Mammary epithelial cell (primary cell): ENCODE measurements at regions of chr9 and their contacts with region 1.

Region 1: DNA sequence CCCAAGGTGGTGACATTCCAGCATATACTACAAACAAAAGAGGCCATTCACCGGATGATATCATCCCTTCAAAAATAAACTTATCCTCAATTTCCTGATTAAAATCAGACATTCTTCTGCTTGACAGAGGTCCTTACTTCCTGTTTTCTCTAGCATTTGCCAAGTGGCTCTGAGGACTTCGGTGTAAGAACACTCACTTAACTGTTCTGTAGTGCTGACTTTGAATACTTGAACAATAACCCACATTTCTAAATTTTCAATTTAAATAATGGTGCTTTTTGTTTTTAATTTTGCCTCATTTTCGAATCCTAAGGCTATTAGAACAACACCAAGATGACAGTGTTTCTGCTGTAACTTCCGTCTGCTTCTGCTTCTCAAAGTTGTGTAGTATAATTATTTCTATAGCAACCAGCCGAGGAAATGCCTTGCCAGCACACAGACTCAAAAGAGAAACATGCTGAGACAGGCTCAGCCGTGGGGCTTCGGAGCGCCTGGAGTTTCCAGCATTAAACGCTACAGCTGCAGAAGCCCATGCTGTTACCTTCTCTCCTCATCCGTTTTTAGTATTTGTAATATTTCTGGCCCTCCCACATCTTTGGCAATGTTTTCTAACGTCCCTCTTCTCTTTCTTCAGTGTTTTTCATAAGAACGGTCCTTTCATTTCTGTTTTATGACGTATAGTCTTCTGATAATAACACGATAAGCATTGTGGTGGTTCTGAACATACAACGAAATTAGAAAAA is 19.5 kb upstream of the ANXA1 start:
- DNase-seq: peak; percentile 97
- H3K4me3 ChIP-seq: peak overlapping the region; percentile 33 to 62 (median 51)
- H3K27ac ChIP-seq: peak overlapping the region; percentile 99
- H3K4me1 ChIP-seq: peaks cover 34% of the 10 kb centered on the region
- H3K27me3 ChIP-seq: no peaks in the 10 kb centered on the region
- CTCF ChIP-seq: no peak

Region 2: DNA sequence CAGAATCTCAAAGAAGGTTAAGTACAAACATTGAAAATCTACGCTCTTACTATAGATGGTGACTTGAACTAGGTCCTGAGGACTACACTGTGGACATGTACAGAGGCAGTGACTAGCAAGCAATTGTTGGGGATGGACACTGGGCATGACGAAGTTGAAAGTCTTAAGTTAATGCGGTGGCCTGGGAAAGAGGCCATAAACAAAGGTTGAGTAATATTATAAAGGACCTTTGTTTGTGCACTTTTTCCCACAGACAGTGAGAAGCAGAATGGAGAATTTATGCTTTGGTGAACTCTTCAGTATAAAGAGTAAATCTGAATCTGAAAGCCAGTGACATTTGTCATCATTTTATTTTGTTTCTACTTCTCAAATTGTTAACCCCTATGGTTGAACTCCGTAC is 194.7 kb before region 1 on chr9:
- CTCF ChIA-PET with region 1: no interaction called
- dilution Hi-C with region 1: no loop called
- in situ Hi-C with region 1: no loop called
- intact Hi-C with region 1: no loop called
- DNase-seq: peak; percentile 47
- H3K4me3 ChIP-seq: no peak overlapping the region
- H3K27ac ChIP-seq: no peak overlapping the region
- H3K4me1 ChIP-seq: no peaks in the 10 kb centered on the region
- H3K27me3 ChIP-seq: no peaks in the 10 kb centered on the region
- CTCF ChIP-seq: no peak

Region 3: GRCh38 chr9:73116031-73116430 is 16.2 kb before region 1 on chr9:
- CTCF ChIA-PET with region 1: no interaction called
- dilution Hi-C with region 1: no loop called
- in situ Hi-C with region 1: no loop called
- intact Hi-C with region 1: loop called (anchors 1 kb)
- DNase-seq: peak; percentile 90
- H3K4me3 ChIP-seq: no peak overlapping the region
- H3K27ac ChIP-seq: peak overlapping the region; percentile 69
- H3K4me1 ChIP-seq: peaks cover 17% of the 10 kb centered on the region
- H3K27me3 ChIP-seq: no peaks in the 10 kb centered on the region
- CTCF ChIP-seq: no peak

Region 4: DNA sequence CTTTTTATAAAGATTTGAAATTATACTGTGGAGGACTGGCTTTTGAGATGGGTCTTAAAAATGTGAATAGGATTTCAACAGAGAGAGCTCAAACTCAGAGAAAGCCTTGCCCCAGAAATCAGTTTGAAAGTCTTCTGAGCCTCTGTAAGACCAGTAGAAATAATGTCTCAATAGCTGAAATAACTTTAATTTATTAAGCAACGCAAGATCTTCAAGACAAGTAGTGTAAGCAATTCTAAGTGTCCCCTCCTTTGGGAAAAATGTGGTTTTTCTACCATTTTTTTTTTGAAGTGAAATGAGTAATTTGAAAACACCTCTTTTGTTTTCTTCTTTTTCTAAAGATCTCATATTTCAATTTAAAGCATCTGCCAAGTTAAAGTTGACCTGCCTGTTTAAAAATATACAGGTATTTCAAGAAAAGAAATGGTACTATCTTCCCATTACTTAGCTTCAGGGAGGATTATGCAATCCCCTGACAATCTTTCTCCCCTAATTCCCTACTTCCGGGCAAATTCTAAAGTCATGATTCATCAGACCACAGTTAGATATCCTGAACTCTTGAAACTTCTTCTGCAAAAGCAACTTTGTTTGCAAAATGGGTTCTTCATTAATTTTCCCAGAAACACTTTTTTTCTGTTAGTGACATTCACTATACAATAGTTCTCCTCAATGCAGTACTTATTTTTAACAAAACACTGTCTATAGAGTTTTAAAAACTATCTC is 11.6 kb after region 1 on chr9:
- CTCF ChIA-PET with region 1: no interaction called
- dilution Hi-C with region 1: no loop called
- in situ Hi-C with region 1: no loop called
- intact Hi-C with region 1: loop called (anchors 1 kb)
- DNase-seq: peak; percentile 83
- H3K4me3 ChIP-seq: no peak overlapping the region
- H3K27ac ChIP-seq: peak overlapping the region; percentile 73
- H3K4me1 ChIP-seq: peaks cover 25% of the 10 kb centered on the region
- H3K27me3 ChIP-seq: no peaks in the 10 kb centered on the region
- CTCF ChIP-seq: no peak